Ovary (tissue), 10 donors: ENCODE measurements at regions of chr6 and their contacts with region 1.

Region 1: GRCh38 chr6:69555088-69555638 is 241.6 kb downstream of the LMBRD1 start:
- DNase-seq: no peak
- H3K4me3 ChIP-seq: no peak overlapping the region
- H3K27ac ChIP-seq: no peak overlapping the region
- H3K4me1 ChIP-seq: no peaks in the 10 kb centered on the region
- H3K27me3 ChIP-seq: no peaks in the 10 kb centered on the region
- CTCF ChIP-seq: no peak
- EP300 ChIP-seq: no peak
- POLR2A ChIP-seq: no peak

Region 2: DNA sequence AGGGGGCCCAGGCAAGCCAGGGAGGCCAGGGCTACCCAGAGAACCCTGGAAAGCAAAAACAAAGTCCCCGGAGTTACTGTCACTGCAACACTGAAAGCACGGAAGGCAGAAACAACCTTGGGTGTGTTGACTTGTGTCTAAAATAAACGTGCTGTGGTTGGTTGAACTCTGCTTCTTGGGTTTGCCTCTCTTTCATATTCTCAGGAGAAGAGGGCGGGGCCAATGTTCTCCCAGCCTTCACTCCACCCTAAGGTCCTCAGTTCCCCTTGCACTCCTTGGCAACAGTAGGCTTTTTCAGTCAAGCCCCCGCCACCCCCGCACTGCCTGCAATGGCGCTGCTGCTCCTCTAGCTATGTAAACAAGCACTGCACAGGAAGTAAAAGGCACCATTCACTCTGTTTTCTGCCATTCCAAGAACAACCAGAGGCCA is 686.8 kb after region 1 on chr6:
- intact Hi-C with region 1: loop called in 1 of 4 experiments (anchors 5 kb)
- DNase-seq: no peak
- H3K4me3 ChIP-seq: no peak overlapping the region
- H3K27ac ChIP-seq: no peak overlapping the region
- H3K4me1 ChIP-seq: no peaks in the 10 kb centered on the region
- H3K27me3 ChIP-seq: no peaks in the 10 kb centered on the region
- CTCF ChIP-seq: no peak
- EP300 ChIP-seq: no peak
- POLR2A ChIP-seq: no peak